ENCODE measurements at regions of chr19 and their contacts with region 1.

Region 1: GRCh38 chr19:41821003-41821735 is 23.3 kb downstream of the LYPD4 start:
- DNase-seq: peak in 27 of 35 experiments; percentile 5 to 69 (median 30)
- ATAC-seq: peak; percentile 64 to 82 (median 70)
- H3K4me3 ChIP-seq: no peak overlapping the region
- H3K4me3 Mint-ChIP-seq: no peak overlapping the region
- H3K27ac ChIP-seq: no peak overlapping the region
- H3K27ac Mint-ChIP-seq: no peak overlapping the region
- H3K4me1 ChIP-seq: no peaks in the 10 kb centered on the region
- H3K4me1 Mint-ChIP-seq: peaks cover 0 to 6% (median 0%) of the 10 kb centered on the region in 3 donors
- H3K27me3 ChIP-seq: peaks cover 2 to 9% of the 10 kb centered on the region in 2 experiments
- H3K27me3 Mint-ChIP-seq: peaks cover 14 to 20% of the 10 kb centered on the region in 2 donors

Region 2: GRCh38 chr19:41775360-41775695 is 45.8 kb before region 1 on chr19:
- CTCF ChIA-PET with region 1: interaction called in 1 of 2 experiments, 13 read pairs
- POLR2A ChIA-PET with region 1: no interaction called
- DNase-seq: no peak
- ATAC-seq: no peak
- H3K4me3 ChIP-seq: no peak overlapping the region
- H3K4me3 Mint-ChIP-seq: peak overlapping the region in 1 of 3 donors; percentile 68
- H3K27ac ChIP-seq: no peak overlapping the region
- H3K27ac Mint-ChIP-seq: no peak overlapping the region
- H3K4me1 ChIP-seq: peaks cover 15 to 29% of the 10 kb centered on the region in 2 experiments
- H3K4me1 Mint-ChIP-seq: peaks cover 41 to 51% (median 42%) of the 10 kb centered on the region in 3 donors
- H3K27me3 ChIP-seq: peaks cover 0 to 23% of the 10 kb centered on the region in 2 experiments
- H3K27me3 Mint-ChIP-seq: peaks cover 40 to 68% of the 10 kb centered on the region in 2 donors

Region 3: GRCh38 chr19:41792513-41793412 is 28.4 kb before region 1 on chr19:
- CTCF ChIA-PET with region 1: interaction called, 3 to 16 read pairs
- POLR2A ChIA-PET with region 1: no interaction called
- DNase-seq: peak in 32 of 35 experiments; percentile 11 to 70 (median 42)
- ATAC-seq: peak in 2 of 4 experiments; percentile 46 to 66
- H3K4me3 ChIP-seq: no peak overlapping the region
- H3K4me3 Mint-ChIP-seq: no peak overlapping the region
- H3K27ac ChIP-seq: no peak overlapping the region
- H3K27ac Mint-ChIP-seq: no peak overlapping the region
- H3K4me1 ChIP-seq: no peaks in the 10 kb centered on the region
- H3K4me1 Mint-ChIP-seq: peaks cover 5 to 12% (median 6%) of the 10 kb centered on the region in 3 donors
- H3K27me3 ChIP-seq: peaks cover 0 to 42% of the 10 kb centered on the region in 2 experiments
- H3K27me3 Mint-ChIP-seq: peaks cover 47 to 57% of the 10 kb centered on the region in 2 donors

Region 4: DNA sequence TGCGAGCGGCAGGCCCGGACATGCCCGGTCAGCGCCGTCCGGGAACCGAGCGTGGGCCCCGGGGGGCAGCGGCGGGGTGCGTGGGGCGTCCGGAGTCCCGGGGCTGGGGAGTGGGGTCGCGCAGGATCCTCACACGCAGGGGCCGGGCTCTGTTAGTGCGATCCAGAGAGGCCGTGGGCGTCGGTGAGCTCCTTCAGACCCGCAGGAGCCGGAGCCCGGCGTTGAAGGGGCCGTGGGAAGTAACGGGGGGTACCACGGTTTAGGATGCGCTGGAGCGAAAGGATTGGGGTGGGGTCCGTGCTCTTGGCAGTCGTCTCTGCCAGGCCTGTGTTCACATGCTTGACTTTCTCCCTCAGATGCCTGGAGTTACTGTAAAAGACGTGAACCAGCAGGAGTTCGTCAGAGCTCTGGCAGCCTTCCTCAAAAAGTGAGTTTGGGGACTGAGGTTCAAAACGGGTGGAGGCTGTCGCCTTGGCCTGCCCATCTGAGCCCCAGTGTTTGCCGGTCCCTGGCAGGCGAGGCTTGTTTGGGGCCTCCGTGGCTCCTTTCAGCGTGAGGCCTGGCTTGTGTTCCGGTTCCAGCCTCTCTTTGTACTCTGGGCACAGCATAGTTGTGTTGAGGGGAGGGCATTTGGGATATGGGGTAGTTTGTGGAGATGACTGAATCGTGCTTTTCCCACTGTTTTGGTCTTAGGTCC is 39.4 kb after region 1 on chr19:
- CTCF ChIA-PET with region 1: no interaction called
- POLR2A ChIA-PET with region 1: no interaction called
- DNase-seq: peak in 4 of 35 experiments; percentile 14 to 44 (median 18)
- ATAC-seq: no peak
- H3K4me3 ChIP-seq: peak overlapping the region; percentile 83 to 96
- H3K4me3 Mint-ChIP-seq: peak overlapping the region; percentile 80 to 95 (median 93)
- H3K27ac ChIP-seq: peak overlapping the region; percentile 64
- H3K27ac Mint-ChIP-seq: peak overlapping the region; percentile 89 to 92
- H3K4me1 ChIP-seq: peaks cover 27 to 55% of the 10 kb centered on the region in 2 experiments
- H3K4me1 Mint-ChIP-seq: peaks cover 46 to 51% (median 49%) of the 10 kb centered on the region in 3 donors
- H3K27me3 ChIP-seq: no peaks in the 10 kb centered on the region
- H3K27me3 Mint-ChIP-seq: no peaks in the 10 kb centered on the region

Region 5: GRCh38 chr19:42420055-42420544 is 598.9 kb after region 1 on chr19:
- CTCF ChIA-PET with region 1: no interaction called
- POLR2A ChIA-PET with region 1: no interaction called
- DNase-seq: peak; percentile 46 to 85 (median 71)
- ATAC-seq: peak in 3 of 4 experiments; percentile 13 to 21 (median 21)
- H3K4me3 ChIP-seq: no peak overlapping the region
- H3K4me3 Mint-ChIP-seq: no peak overlapping the region
- H3K27ac ChIP-seq: no peak overlapping the region
- H3K27ac Mint-ChIP-seq: peak overlapping the region; percentile 18 to 31
- H3K4me1 ChIP-seq: peaks cover 8 to 50% of the 10 kb centered on the region in 2 experiments
- H3K4me1 Mint-ChIP-seq: peaks cover 42 to 47% (median 44%) of the 10 kb centered on the region in 3 donors
- H3K27me3 ChIP-seq: no peaks in the 10 kb centered on the region
- H3K27me3 Mint-ChIP-seq: no peaks in the 10 kb centered on the region

Region 6: DNA sequence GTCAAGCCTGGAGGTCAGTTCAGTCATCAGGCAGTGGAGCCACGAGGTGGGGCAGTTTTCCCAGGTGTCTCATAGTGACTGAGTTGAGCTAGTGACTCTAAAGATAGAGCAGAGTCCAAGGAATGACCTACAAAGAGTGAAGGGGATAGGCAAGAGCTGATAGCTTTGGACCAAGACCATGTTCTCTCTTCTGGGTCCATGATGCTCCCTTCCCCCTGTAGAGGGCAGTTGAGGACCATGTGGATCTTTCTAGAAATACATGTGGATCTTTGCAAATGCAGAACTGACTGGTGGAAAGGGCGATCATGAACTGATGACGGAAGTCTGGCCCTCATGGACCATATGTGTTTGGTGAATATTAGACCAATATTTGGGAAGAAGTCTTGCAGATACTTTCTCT is 1051.4 kb after region 1 on chr19:
- CTCF ChIA-PET with region 1: no interaction called
- POLR2A ChIA-PET with region 1: no interaction called
- DNase-seq: no peak
- ATAC-seq: no peak
- H3K4me3 ChIP-seq: no peak overlapping the region
- H3K4me3 Mint-ChIP-seq: no peak overlapping the region
- H3K27ac ChIP-seq: no peak overlapping the region
- H3K27ac Mint-ChIP-seq: no peak overlapping the region
- H3K4me1 ChIP-seq: no peaks in the 10 kb centered on the region
- H3K4me1 Mint-ChIP-seq: no peaks in the 10 kb centered on the region
- H3K27me3 ChIP-seq: peaks cover 0 to 5% of the 10 kb centered on the region in 2 experiments
- H3K27me3 Mint-ChIP-seq: peaks cover 0 to 18% of the 10 kb centered on the region in 2 donors

Measured in T-cell (primary cell).